ENCODE measurements at regions of chr11 and their contacts with region 1.

Region 1: DNA sequence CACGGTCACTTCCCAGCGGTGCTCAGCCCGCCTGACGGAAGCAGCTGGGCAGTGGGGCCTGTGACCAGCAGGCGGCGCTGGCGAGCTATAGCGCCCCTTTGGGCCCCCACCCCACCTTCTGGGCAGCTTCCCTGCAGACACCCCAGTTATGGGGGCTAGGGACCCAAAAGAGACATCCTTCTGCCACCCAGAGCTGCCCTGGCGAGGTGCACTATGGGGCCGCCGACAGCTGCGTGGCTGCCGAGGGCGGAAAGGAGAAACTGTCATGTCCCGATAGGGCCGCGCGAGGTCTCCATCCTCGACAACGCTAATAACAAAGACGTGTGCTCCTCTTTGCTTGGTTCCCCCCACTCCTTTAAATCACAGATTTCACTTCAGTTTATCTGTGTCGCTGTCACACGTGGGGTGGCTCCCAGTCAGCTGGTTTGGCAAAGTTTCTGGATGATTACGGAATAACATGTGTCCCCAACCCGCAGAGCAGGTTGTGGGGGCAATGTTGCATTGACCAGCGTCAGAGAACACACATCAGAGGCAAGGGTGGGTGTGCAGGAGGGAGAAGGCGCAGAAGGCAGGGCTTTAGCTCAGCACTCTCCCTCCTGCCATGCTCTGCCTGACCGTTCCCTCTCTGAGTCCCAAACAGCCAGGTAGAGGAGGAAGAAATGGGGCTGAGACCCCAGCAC is 674 bp upstream of the MYO7A start:
- DNase-seq: peak; percentile 82
- ATAC-seq: peak; percentile 62

Region 2: GRCh38 chr11:77187776-77188632 is 60.6 kb after region 1 on chr11:
- intact Hi-C with region 1: loop called (anchors 1 kb)
- DNase-seq: peak; percentile 91
- ATAC-seq: peak; percentile 84

Region 3: GRCh38 chr11:77381729-77382685 is 254.6 kb after region 1 on chr11:
- intact Hi-C with region 1: no loop called
- DNase-seq: no peak
- ATAC-seq: no peak

Region 4: GRCh38 chr11:77547863-77548551 is 420.6 kb after region 1 on chr11:
- intact Hi-C with region 1: loop called (anchors 5 kb)
- DNase-seq: no peak
- ATAC-seq: peak; percentile 46

Measured in Right ventricle myocardium inferior (tissue), 1 donor.